ENCODE measurements at regions of chr4 and their contacts with region 1.

Region 1: DNA sequence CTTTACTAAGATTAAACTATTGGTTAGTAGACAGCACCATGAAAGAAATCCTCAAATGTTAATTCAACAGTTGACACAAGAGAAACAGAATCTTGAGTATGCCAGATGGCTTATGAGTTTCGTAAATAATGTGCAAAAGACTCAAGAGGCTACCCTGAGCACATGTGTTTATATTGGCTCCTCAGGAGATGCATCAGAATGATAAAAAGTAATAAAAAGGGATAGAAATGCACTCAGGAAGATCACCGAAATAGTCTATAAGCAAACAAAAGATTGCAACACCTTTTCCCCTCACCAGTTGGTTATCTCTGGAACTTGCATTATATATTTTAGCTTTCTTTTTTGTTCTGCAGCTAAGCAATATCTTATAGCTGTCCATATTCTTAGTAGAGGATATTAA is 84.4 kb downstream of the SCFD2 start:
- DNase-seq: no peak
- H3K4me3 ChIP-seq: no peak overlapping the region
- H3K27ac ChIP-seq: no peak overlapping the region
- H3K4me1 ChIP-seq: no peaks in the 10 kb centered on the region
- H3K27me3 ChIP-seq: no peaks in the 10 kb centered on the region
- CTCF ChIP-seq: no peak

Region 2: GRCh38 chr4:52996261-52996892 is 285.1 kb before region 1 on chr4:
- CTCF ChIA-PET with region 1: no interaction called
- dilution Hi-C with region 1: no loop called
- in situ Hi-C with region 1: no loop called
- intact Hi-C with region 1: no loop called
- DNase-seq: no peak
- H3K4me3 ChIP-seq: no peak overlapping the region
- H3K27ac ChIP-seq: no peak overlapping the region
- H3K4me1 ChIP-seq: peaks cover 12% of the 10 kb centered on the region
- H3K27me3 ChIP-seq: no peaks in the 10 kb centered on the region
- CTCF ChIP-seq: no peak

Region 3: DNA sequence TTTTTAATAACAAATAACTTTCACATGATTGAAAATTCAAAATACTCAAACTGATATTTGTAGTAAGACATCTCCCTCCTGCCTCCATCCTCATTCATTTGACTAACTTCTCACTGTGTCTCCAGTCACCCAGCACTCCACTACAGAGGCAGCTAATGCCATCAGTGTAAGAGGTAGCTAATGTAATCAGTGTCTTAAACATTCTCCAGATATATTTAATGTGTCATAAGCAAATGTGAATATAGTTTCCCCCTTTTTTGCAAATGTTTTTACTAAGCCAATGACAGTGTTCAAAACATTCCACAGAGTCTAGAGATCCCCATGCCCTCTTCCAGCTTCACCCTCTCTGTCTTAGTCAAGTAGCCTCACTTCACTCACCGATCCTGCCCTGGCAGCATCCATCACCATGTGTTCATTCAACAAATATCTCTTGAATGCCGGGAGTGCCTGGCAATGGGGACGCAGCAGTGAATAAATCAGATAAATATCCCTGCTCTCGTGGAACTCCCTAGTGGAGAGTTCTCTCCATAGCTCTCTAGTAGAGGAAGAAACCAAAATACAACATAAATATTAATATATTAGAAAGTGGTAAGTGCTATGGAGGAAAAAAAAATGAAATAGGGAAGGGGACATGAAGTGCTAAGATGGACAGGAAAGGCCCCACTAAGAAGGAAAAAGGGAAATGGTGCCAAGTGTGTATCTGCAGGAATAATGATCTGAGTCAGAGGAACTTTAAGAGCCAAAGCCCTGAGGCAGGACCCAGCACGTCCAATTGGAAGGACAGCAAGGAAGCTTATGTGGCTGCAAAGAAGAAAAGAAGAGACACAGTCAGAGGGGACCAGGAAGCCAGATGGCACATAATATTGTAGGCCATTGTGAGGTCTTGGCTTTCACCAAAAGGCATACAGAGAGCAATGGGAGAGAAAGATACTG is 65.7 kb after region 1 on chr4:
- CTCF ChIA-PET with region 1: no interaction called
- dilution Hi-C with region 1: loop called (anchors 5 kb)
- in situ Hi-C with region 1: no loop called
- intact Hi-C with region 1: no loop called
- DNase-seq: peak; percentile 66
- H3K4me3 ChIP-seq: no peak overlapping the region
- H3K27ac ChIP-seq: no peak overlapping the region
- H3K4me1 ChIP-seq: peaks cover 14% of the 10 kb centered on the region
- H3K27me3 ChIP-seq: no peaks in the 10 kb centered on the region
- CTCF ChIP-seq: no peak

Region 4: DNA sequence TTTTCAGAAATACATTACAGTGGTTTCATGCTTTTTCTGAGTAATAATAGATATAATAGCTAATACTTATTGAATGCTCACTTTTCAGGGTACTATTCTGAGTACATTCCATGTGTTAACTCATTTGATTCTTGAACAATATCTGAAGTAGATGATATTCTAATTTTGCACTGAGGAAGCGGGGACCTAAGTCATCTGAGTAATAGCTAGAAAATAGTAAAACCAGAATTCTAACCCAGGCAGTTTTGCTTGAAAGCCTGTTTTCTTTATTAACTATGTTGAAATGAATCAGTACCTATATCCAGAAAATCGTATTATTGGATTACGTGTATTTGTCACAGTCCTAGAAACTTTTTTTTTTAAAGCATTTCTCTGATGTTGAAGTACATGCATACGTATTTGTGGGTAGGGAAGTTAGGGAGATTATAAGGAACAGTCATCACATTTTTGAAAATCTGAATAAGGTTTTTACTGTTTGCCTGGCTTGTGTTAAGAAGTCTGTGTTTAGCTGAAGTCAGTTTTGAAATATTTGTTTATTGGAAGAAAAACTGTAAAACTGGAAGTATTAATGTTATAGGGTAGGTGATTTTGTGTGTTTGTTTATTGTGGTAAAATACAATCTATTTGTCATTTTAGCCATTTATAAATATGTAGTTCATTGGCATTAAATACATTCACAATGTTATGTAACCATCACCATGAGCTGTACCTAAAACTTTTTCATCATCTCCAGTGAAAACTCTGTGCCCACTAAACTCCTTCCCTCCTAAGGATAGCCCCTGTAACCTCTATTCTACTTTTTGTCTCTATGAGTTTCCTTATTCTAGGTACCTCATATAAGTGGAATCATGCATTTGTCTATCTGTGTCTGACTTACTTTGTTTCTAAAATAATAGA is 151.3 kb after region 1 on chr4:
- CTCF ChIA-PET with region 1: no interaction called
- dilution Hi-C with region 1: no loop called
- in situ Hi-C with region 1: no loop called
- intact Hi-C with region 1: no loop called
- DNase-seq: no peak
- H3K4me3 ChIP-seq: no peak overlapping the region
- H3K27ac ChIP-seq: no peak overlapping the region
- H3K4me1 ChIP-seq: no peaks in the 10 kb centered on the region
- H3K27me3 ChIP-seq: no peaks in the 10 kb centered on the region
- CTCF ChIP-seq: no peak